ENCODE measurements at regions of chr17 and their contacts with region 1.

Region 1: DNA sequence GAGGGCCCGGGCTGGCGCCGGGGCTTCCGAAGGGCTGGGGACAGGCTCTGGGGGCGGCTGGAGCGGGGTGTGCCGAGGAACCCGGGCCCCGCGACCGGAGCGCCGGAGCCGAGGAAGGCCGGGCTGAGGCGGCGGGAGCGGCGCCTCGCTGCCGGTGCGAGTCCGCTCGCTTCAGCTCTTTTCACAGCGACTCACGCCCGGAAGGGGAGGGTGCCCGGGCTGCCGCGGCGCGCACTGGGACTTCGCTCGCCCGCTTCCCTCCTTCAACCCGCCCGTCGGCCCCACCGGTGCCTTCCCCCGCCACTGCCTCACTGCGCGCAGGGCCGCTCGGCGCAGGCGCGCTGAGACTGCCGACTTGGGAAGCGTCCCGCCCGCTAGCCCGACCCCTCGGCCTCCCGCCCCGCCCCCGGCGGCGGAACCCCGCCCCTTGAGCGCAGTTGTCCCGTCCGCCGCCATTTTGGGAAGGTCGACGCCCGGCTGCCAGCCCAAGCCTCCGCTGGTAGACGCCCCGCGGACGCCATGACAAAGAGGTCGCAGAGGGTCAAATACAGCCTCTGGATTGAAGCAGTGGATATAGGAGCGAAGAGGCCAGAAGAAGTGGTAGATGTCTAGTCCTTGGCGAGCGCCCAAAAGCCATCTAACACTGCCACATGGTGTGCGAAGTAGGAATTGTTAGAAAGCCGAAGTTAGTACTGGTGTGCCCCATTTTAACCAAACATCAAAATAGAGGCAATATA is at the start of gene UBE2G1:
- DNase-seq: peak; percentile 98 to 99
- ATAC-seq: peak; percentile 92 to 96 (median 94)
- H3K4me3 ChIP-seq: peak within 1 kb of the TSS; percentile 82 to 100 (median 98)
- H3K27ac ChIP-seq: peak within 1 kb of the TSS; percentile 91 to 100 (median 98)
- H3K4me1 ChIP-seq: peaks cover 2 to 39% (median 29%) of the 10 kb centered on the region in 9 donors
- H3K27me3 ChIP-seq: no peaks in the 10 kb centered on the region
- CTCF ChIP-seq: peak in 5 of 9 donors; percentile 21 to 45 (median 37)
- total RNA-seq, gene UBE2G1: 82.1 to 119 (median 104) TPM

Region 2: GRCh38 chr17:4206962-4207361 is 159.5 kb before region 1 on chr17:
- intact Hi-C with region 1: loop called in 4 of 10 experiments (anchors 2 to 10 kb)
- DNase-seq: no peak
- ATAC-seq: no peak
- H3K4me3 ChIP-seq: no peak overlapping the region
- H3K27ac ChIP-seq: no peak overlapping the region
- H3K4me1 ChIP-seq: peaks cover 0 to 33% (median 15%) of the 10 kb centered on the region in 9 donors
- H3K27me3 ChIP-seq: no peaks in the 10 kb centered on the region
- CTCF ChIP-seq: no peak

Region 3: DNA sequence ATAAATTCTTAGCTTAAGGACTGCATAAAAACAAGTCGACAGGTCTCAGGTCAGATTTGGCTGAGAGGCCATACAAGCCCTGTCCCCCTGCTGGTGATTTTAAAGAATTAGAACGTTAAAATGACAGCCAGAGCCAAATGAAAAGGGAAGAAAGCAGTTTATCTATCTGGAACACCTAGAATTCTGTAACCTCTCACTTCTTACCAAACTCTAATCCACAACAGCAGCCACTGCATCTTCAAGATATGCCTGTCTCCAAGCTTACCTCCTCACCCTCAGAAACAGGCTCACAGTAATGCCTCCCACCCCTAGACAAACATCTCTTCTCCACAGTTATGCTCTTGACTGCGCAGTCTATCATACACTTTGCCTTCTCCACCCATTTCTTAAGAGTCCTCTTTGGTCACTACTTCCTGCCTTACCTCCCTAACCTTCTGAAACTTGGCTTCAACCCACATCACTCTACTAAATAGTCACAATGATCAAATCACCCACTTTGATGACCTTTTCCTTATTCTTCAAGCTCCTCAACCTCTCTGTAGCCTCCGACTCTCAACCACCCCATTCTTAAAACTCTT is 117.0 kb before region 1 on chr17:
- intact Hi-C with region 1: no loop called
- DNase-seq: no peak
- ATAC-seq: peak in 3 of 8 donors; percentile 6 to 50 (median 39)
- H3K4me3 ChIP-seq: no peak overlapping the region
- H3K27ac ChIP-seq: peak overlapping the region in 2 of 10 donors; percentile 18 to 40
- H3K4me1 ChIP-seq: peaks cover 0 to 48% (median 33%) of the 10 kb centered on the region in 9 donors
- H3K27me3 ChIP-seq: no peaks in the 10 kb centered on the region
- CTCF ChIP-seq: peak; percentile 16 to 61 (median 50)

Region 4: DNA sequence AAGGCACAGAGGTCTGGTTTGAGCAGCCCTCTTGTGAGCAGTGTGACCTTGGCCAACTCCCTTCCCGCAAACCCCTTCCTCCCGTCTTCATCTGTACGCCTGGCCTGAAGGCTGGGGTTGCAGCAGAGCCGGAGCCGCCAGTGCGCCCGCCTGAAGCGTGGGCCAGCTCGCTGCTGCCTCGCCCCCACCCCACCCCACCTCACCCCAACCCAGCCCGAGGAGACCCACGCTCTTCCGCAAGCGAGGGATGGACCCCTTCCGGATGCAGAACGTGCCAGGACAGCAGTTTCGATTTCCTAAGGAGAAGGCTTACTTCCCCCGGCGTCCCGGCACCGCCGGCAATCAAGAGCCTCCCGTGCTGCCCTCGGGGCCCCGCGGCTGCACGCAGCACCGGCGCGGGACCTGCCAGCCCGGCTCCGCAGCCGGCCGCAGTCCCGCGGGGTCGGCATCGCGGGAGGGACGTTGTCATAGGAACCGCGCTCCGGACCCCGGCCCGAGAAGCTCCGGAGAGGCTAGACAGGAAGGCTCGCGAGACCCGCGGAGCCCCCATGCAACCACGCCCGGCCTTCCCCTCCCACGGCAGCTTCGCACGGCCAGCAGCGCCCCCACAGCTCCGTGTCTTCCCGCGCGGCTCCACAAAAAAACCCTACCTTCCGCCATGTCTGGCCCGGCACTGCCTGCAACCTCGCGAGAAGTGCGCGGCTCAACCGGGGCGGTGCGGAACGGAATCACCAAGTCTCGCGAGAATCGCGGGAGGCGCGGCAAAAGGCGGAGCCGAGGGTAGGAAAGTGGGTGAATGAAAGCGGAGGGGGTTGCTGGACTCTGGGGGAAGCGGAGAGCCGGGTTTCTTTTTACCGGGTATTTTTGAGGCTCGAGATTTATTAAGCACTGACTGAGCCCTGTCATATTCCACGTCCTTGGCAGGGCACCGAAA is 102.9 kb before region 1 on chr17 and contains the start of gene ANKFY1:
- intact Hi-C with region 1: loop called in 1 of 10 experiments (anchors 2 kb)
- DNase-seq: peak; percentile 97 to 98
- ATAC-seq: peak; percentile 94 to 99 (median 99)
- H3K4me3 ChIP-seq: peak within 1 kb of the TSS; percentile 72 to 100 (median 84)
- H3K27ac ChIP-seq: peak within 1 kb of the TSS; percentile 6 to 97 (median 89)
- H3K4me1 ChIP-seq: peaks cover 8 to 29% (median 23%) of the 10 kb centered on the region in 9 donors
- H3K27me3 ChIP-seq: no peaks in the 10 kb centered on the region
- CTCF ChIP-seq: peak in 4 of 9 donors; percentile 16 to 44 (median 28)
- total RNA-seq, gene ANKFY1: 18.7 to 34.4 (median 24.4) TPM

Region 5: GRCh38 chr17:4310349-4311060 is 56.0 kb before region 1 on chr17:
- intact Hi-C with region 1: loop called in 6 of 10 experiments (anchors 5 to 10 kb)
- DNase-seq: peak in 1 of 2 donors; percentile 60
- ATAC-seq: peak; percentile 69 to 91 (median 77)
- H3K4me3 ChIP-seq: no peak overlapping the region
- H3K27ac ChIP-seq: peak overlapping the region; percentile 22 to 76 (median 64)
- H3K4me1 ChIP-seq: peaks cover 8 to 78% (median 55%) of the 10 kb centered on the region in 9 donors
- H3K27me3 ChIP-seq: no peaks in the 10 kb centered on the region
- CTCF ChIP-seq: no peak

Region 6: GRCh38 chr17:4444782-4445473 is 78.4 kb after region 1 on chr17:
- intact Hi-C with region 1: no loop called
- DNase-seq: peak; percentile 71 to 83
- ATAC-seq: peak; percentile 68 to 95 (median 87)
- H3K4me3 ChIP-seq: no peak overlapping the region
- H3K27ac ChIP-seq: peak overlapping the region in 8 of 10 donors; percentile 26 to 83 (median 65)
- H3K4me1 ChIP-seq: peaks cover 4 to 50% (median 25%) of the 10 kb centered on the region in 9 donors
- H3K27me3 ChIP-seq: no peaks in the 10 kb centered on the region
- CTCF ChIP-seq: no peak

Region 7: GRCh38 chr17:4463818-4464476 is 97.5 kb after region 1 on chr17:
- intact Hi-C with region 1: no loop called
- DNase-seq: peak in 1 of 2 donors; percentile 41
- ATAC-seq: peak; percentile 33 to 92 (median 86)
- H3K4me3 ChIP-seq: no peak overlapping the region
- H3K27ac ChIP-seq: peak overlapping the region in 6 of 10 donors; percentile 17 to 75 (median 26)
- H3K4me1 ChIP-seq: peaks cover 0 to 11% (median 5%) of the 10 kb centered on the region in 9 donors
- H3K27me3 ChIP-seq: no peaks in the 10 kb centered on the region
- CTCF ChIP-seq: no peak